H1 (cell line): ENCODE measurements at regions of chr6 and their contacts with region 1.

Region 1: DNA sequence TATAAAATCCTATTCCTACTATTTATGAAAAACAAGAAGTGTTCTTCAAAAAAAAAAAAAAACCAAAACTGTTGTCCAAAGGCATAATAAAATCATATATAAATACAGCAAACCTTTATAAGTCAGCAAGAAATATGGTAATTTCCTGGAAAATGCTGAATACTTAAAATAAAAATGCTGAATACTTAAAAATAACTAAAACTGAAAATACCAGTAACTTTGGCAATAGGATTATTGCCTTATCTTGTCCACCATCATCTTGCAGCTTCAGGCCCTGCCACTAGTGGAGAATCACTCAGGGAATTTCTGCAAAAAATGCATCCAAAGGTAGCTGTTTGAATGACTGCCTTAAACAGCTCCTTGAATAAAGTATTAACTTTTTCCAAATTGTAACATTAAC is 24.5 kb downstream of the CCNC start:
- DNase-seq: no peak
- H3K4me3 ChIP-seq: no peak overlapping the region
- H3K27ac ChIP-seq: no peak overlapping the region
- H3K4me1 ChIP-seq: no peaks in the 10 kb centered on the region
- H3K27me3 ChIP-seq: no peaks in the 10 kb centered on the region
- CTCF ChIP-seq: no peak
- EP300 ChIP-seq: no peak
- POLR2A ChIP-seq: no peak
- RAD21 ChIP-seq: no peak

Region 2: DNA sequence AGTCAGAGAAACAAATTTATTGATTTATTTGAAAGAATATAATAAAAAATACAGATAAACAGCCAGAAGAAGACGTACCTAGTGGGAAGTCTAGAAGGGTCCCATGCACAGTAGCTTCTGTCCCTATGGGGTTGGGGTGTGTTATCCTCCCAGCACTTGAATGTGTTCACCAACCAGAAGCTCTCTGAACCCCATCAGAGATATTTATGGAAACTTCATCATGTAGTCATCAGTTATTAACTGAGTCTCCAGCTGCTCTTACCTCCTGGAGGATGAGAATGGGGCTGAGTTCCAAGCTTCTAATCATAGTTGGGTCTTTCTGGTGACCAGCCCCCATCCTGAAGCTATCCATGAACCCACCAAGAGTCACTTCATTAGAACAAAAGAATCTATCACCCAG is 13.3 kb before region 1 on chr6:
- CTCF ChIA-PET with region 1: interaction called, 3 read pairs
- POLR2A ChIA-PET with region 1: interaction called, 11 read pairs
- DNase-seq: no peak
- H3K4me3 ChIP-seq: no peak overlapping the region
- H3K27ac ChIP-seq: no peak overlapping the region
- H3K4me1 ChIP-seq: no peaks in the 10 kb centered on the region
- H3K27me3 ChIP-seq: no peaks in the 10 kb centered on the region
- CTCF ChIP-seq: no peak
- EP300 ChIP-seq: no peak
- POLR2A ChIP-seq: no peak
- RAD21 ChIP-seq: no peak

Region 3: GRCh38 chr6:99885051-99885450 is 341.1 kb after region 1 on chr6:
- CTCF ChIA-PET with region 1: no interaction called
- POLR2A ChIA-PET with region 1: no interaction called
- DNase-seq: no peak
- H3K4me3 ChIP-seq: no peak overlapping the region
- H3K27ac ChIP-seq: no peak overlapping the region
- H3K4me1 ChIP-seq: no peaks in the 10 kb centered on the region
- H3K27me3 ChIP-seq: no peaks in the 10 kb centered on the region
- CTCF ChIP-seq: no peak
- EP300 ChIP-seq: no peak
- POLR2A ChIP-seq: no peak
- RAD21 ChIP-seq: no peak